Right ventricle myocardium inferior (tissue), 1 donor: ENCODE measurements at regions of chr1 and their contacts with region 1.

Region 1: DNA sequence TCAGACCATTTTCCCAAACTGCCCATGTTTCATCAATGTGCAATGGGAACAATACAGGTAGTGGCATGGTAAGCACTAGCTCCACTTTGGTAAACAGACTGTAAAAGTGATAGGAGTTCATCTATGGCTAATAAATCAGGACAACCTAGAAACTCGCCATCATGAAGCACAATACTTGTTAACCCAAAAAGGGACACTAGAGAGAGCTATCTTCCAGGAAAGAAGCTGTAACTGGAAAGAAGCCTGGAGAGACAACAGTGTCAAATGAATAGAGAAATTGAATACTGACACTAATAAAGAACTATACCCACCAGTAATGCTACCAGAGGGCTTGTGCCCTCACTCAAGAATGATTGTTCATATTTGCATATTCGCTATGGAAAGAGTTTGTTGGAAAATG is 164.7 kb upstream of the RGS18 start:
- DNase-seq: no peak
- ATAC-seq: no peak

Region 2: DNA sequence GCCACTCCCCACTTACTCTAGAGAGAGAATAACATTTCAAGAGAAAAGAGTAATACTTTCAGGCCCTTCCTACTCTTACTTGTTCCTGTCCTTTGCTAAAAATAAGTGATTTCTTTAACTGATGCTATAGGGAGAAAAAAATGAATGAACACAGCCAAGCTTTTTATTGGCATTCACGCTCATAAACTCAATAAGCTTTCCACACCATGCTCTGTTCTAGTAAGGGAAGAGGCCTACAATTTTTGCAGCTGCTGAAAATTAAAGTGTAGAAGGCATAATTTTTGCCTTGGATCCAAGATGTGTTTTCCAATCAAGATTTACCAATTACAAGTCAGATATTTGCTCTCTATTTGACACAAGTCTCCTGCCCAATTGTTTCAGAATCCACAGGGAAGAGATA is 23.4 kb before region 1 on chr1:
- intact Hi-C with region 1: no loop called
- DNase-seq: no peak
- ATAC-seq: no peak

Region 3: GRCh38 chr1:192311281-192311680 is 317.7 kb after region 1 on chr1:
- intact Hi-C with region 1: loop called (anchors 5 kb)
- DNase-seq: no peak
- ATAC-seq: no peak